ENCODE measurements at regions of chr6 and their contacts with region 1.

Region 1: GRCh38 chr6:42879372-42880239 is at the start of gene RPL7L1:
- DNase-seq: peak; percentile 92
- H3K4me3 ChIP-seq: peak within 1 kb of the TSS; percentile 79
- H3K27ac ChIP-seq: peak within 1 kb of the TSS; percentile 75
- H3K4me1 ChIP-seq: peaks cover 18% of the 10 kb centered on the region
- CTCF ChIP-seq: no peak
- total RNA-seq, gene RPL7L1: 83.2 and 101 TPM in 2 replicates

Region 2: DNA sequence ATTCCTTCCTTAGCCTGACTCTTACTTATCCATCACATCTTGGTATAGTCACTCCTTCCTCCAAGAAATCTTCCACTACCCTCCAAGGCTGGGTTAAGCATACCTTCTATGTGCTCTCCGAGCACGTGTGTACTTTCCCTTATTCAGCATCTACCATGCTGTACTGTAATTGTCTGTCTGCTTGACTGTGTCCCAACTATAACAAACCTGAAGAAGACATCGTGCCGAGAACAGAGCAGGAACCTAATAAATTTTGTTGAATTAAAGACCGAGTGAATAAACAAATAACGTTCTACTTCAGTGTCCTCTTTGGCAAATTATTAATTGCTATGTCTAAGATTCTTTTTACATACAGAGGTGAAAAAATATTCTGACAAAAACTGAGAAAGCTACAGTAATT is 1020.2 kb before region 1 on chr6:
- CTCF ChIA-PET with region 1: interaction called, 11 read pairs
- POLR2A ChIA-PET with region 1: no interaction called
- intact Hi-C with region 1: no loop called
- DNase-seq: no peak
- H3K4me3 ChIP-seq: no peak overlapping the region
- H3K27ac ChIP-seq: no peak overlapping the region
- H3K4me1 ChIP-seq: no peaks in the 10 kb centered on the region
- CTCF ChIP-seq: no peak

Region 3: DNA sequence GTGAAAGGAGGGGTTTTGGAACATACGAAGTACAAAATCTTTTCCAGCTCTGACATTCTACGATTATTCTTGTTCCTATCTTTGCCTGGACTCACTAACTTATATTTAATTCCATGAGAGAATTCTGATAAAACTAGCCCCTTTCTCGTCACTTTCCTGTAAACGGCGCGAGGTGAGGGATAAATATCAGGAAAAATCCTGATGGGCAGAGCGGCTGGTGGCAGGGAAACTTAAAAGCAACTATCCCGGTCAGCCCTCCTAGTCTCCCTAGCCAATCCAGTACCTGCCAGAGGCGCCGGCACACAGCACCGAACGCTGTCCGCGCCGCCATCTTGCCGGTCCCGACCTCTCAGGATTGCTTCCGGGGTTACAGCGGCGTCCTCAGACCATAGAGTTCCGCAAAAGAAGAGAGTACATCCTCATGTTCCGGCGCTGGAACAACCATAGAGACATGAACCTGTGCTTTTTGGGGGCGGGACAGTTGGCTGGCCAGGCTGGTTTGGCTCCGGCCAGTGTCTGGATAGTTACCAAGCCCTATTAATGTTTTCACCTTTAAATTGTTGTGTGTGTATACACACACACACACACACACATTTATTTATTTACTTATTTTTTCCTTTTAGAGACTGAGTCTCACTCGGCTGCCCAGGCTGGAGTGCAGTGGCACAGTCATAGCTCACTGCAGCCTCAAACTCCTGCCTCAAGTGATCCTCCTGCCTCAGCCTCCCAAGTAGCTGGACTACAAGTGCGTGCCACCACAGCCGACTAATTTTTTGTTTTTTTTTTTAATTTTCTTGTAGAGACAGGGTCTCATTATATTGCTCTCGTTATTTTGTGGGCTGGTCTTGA is 661.9 kb before region 1 on chr6 and contains the start of gene MRPS10:
- CTCF ChIA-PET with region 1: no interaction called
- POLR2A ChIA-PET with region 1: no interaction called
- intact Hi-C with region 1: loop called (anchors 2 kb)
- DNase-seq: peak; percentile 96
- H3K4me3 ChIP-seq: peak within 1 kb of the TSS; percentile 89
- H3K27ac ChIP-seq: peak within 1 kb of the TSS; percentile 48
- H3K4me1 ChIP-seq: peaks cover 26% of the 10 kb centered on the region
- CTCF ChIP-seq: no peak; the same call in 1 of the 2 replicates
- total RNA-seq, gene MRPS10: 25.1 and 25.8 TPM in 2 replicates

Region 4: GRCh38 chr6:42563697-42564505 is 315.7 kb before region 1 on chr6 and contains the start of gene UBR2:
- CTCF ChIA-PET with region 1: no interaction called
- POLR2A ChIA-PET with region 1: interaction called, 3 read pairs
- intact Hi-C with region 1: loop called (anchors 5 kb)
- DNase-seq: peak; percentile 99
- H3K4me3 ChIP-seq: peak within 1 kb of the TSS; percentile 88
- H3K27ac ChIP-seq: peak within 1 kb of the TSS; percentile 54
- H3K4me1 ChIP-seq: peaks cover 20% of the 10 kb centered on the region
- CTCF ChIP-seq: peak; percentile 75
- total RNA-seq, gene UBR2: 16.6 and 17.1 TPM in 2 replicates

Region 5: GRCh38 chr6:42661540-42662153 is 218.0 kb before region 1 on chr6:
- CTCF ChIA-PET with region 1: interaction called, 9 read pairs
- POLR2A ChIA-PET with region 1: interaction called, 3 read pairs
- intact Hi-C with region 1: loop called (anchors 1 kb)
- DNase-seq: peak; percentile 81
- H3K4me3 ChIP-seq: no peak overlapping the region
- H3K27ac ChIP-seq: no peak overlapping the region
- H3K4me1 ChIP-seq: no peaks in the 10 kb centered on the region
- CTCF ChIP-seq: peak; percentile 100

Region 6: GRCh38 chr6:42726485-42727086 is 153.0 kb before region 1 on chr6:
- CTCF ChIA-PET with region 1: interaction called, 4 read pairs
- POLR2A ChIA-PET with region 1: interaction called, 6 read pairs
- intact Hi-C with region 1: loop called (anchors 1 kb)
- DNase-seq: peak; percentile 91
- H3K4me3 ChIP-seq: peak overlapping the region; percentile 31
- H3K27ac ChIP-seq: peak overlapping the region; percentile 50
- H3K4me1 ChIP-seq: peaks cover 16% of the 10 kb centered on the region
- CTCF ChIP-seq: peak; percentile 98

Region 7: GRCh38 chr6:42782622-42783176 is 96.9 kb before region 1 on chr6:
- CTCF ChIA-PET with region 1: interaction called, 3 read pairs
- POLR2A ChIA-PET with region 1: interaction called, 3 read pairs
- intact Hi-C with region 1: loop called (anchors 2 kb)
- DNase-seq: peak; percentile 74
- H3K4me3 ChIP-seq: peak overlapping the region; percentile 75
- H3K27ac ChIP-seq: peak overlapping the region; percentile 92
- H3K4me1 ChIP-seq: peaks cover 69% of the 10 kb centered on the region
- CTCF ChIP-seq: no peak

Region 8: GRCh38 chr6:43347021-43347420 is 467.4 kb after region 1 on chr6:
- CTCF ChIA-PET with region 1: no interaction called
- POLR2A ChIA-PET with region 1: no interaction called
- intact Hi-C with region 1: no loop called
- DNase-seq: no peak
- H3K4me3 ChIP-seq: no peak overlapping the region
- H3K27ac ChIP-seq: no peak overlapping the region
- H3K4me1 ChIP-seq: no peaks in the 10 kb centered on the region
- CTCF ChIP-seq: no peak

Region 9: DNA sequence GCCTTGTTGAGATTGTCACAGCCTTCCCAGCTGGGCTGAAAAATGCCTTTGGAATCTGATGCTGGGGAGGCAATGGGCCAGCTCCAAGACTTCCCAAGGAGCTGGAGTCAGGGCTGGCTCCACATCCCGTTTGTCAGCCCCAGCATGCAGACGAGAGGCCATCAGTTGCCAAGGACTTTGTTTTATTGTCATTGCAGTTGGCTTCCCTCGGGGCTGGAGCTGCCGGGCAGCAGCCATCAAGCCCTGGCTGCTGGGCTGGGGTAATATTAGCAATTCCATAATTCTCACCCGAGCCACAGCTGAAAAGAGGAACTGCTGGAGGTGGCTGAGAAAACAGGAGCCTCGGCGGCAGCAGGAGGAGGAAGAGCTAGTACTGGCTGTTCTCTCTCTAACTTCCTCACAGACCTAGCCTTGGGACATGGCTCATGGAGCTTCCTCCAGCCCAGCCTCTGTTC is 1690.4 kb after region 1 on chr6:
- CTCF ChIA-PET with region 1: no interaction called
- POLR2A ChIA-PET with region 1: no interaction called
- intact Hi-C with region 1: no loop called
- DNase-seq: no peak
- H3K4me3 ChIP-seq: no peak overlapping the region
- H3K27ac ChIP-seq: no peak overlapping the region
- H3K4me1 ChIP-seq: no peaks in the 10 kb centered on the region
- CTCF ChIP-seq: no peak